Activated B cell treated with CpG ODN at 0.5 μM for 24 hours (primary cell): ENCODE measurements at regions of chr9 and their contacts with region 1.

Region 1: GRCh38 chr9:89410641-89411350 is 87.1 kb downstream of the SEMA4D start:
- DNase-seq: no peak
- ATAC-seq: peak; percentile 20
- H3K4me3 Mint-ChIP-seq: no peak overlapping the region
- H3K27ac Mint-ChIP-seq: peak overlapping the region; percentile 35
- H3K4me1 Mint-ChIP-seq: peaks cover 58% of the 10 kb centered on the region
- H3K27me3 Mint-ChIP-seq: no peaks in the 10 kb centered on the region
- CTCF ChIP-seq: no peak

Region 2: DNA sequence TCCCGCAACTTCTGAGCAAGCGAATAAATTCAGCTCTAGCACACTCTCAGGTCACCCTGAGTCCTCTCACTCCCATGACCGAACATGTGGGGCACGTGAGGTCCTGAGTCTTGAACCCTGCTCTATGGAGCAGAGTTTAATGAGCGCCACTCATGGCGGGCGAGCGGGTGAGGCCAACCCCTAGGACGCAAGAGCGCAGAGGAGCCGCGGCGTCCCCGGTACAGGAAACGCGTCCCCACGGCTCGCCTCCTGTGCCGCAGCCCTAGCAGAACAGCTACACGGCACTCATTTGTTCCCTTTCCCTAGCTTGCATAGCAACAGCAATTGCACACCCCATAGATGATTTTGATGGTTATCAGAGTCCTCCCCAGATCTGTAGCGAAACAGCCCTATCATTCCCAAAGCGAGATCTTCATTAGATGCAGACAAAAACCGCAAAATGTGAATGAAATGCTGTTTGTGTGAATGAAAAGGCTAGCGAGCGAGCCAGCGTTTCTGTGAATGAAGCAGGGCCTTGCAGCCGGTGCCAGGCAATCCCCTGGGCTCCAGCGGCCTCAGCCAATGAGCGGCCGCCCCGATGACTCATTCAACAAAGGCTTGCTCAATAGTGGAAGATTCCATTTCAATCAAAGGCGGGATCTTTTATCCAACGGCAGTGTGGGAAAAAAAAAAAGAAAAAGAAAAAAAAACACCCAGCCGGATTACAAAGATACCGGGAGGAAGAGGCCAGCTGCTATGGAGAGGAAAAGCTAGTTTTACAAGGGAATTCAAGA is 230.7 kb before region 1 on chr9:
- CTCF ChIA-PET with region 1: no interaction called
- POLR2A ChIA-PET with region 1: no interaction called
- intact Hi-C with region 1: no loop called
- DNase-seq: no peak
- ATAC-seq: peak; percentile 37
- H3K4me3 Mint-ChIP-seq: peak overlapping the region; percentile 45
- H3K27ac Mint-ChIP-seq: no peak overlapping the region
- H3K4me1 Mint-ChIP-seq: peaks cover 17% of the 10 kb centered on the region
- H3K27me3 Mint-ChIP-seq: peaks cover 54% of the 10 kb centered on the region
- CTCF ChIP-seq: no peak

Region 3: DNA sequence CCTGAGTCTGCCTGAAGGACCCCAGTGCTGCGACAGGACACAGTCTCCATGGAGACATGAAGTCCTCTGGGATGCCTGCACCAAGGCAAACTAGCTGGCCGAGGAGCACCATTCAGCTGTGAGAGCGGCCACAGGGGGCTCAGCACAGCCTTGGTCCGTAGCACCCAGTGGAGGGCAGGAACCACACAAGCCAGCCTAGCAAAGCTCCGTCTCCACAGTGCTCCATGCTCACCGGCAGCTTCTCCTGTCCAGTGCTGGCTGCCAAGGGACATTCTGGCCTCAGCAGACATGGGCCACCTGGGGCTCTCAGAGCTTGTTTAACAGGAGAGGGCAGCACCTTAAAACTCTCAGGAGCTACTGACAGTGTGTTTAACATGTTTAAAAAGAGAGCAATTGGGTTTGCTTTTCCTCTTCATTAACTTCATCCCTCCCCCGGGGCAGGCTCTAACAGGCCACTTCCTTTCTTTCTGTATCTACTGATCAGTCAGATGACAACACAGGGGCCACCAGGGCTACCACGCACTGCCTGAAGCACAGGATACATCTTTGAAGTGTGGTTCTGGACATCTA is 35.5 kb before region 1 on chr9:
- CTCF ChIA-PET with region 1: interaction called, 6 read pairs
- POLR2A ChIA-PET with region 1: interaction called, 4 read pairs
- intact Hi-C with region 1: loop called (anchors 5 kb)
- DNase-seq: no peak
- ATAC-seq: peak; percentile 89
- H3K4me3 Mint-ChIP-seq: peak overlapping the region; percentile 55
- H3K27ac Mint-ChIP-seq: peak overlapping the region; percentile 89
- H3K4me1 Mint-ChIP-seq: peaks cover 28% of the 10 kb centered on the region
- H3K27me3 Mint-ChIP-seq: no peaks in the 10 kb centered on the region
- CTCF ChIP-seq: no peak